Prostate gland (tissue), 2 donors: ENCODE measurements at regions of chr11 and their contacts with region 1.

Region 1: DNA sequence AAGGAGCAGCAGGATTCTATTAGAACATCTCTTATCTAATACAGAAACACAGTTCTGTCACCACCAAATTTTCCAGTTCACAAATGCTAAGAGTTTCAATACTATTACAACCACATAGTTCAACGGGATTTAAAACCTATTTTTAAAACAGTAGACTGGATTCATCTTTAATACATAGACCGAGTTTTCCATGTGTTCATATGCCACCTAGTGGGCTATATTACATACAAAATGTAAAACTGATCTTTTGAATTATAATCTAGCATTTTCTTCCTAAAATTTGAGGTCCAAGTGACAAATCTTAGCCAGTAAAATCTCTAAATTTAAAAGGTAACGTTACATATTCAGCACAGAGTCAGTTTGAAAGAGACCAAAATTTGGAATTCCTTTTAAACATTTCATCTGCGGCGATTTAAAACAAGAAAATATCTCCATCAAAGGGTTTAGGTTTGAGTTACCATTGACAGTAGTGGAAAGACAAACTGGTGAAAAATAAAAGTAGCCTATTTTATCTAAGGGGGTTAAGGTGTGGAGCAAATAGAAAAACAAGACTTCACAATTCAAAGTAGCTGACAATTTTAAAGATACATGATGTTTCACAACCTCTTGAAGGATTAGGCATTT is 269.3 kb upstream of the MPPED2 start:
- DNase-seq: no peak
- H3K4me3 ChIP-seq: no peak overlapping the region
- H3K27ac ChIP-seq: no peak overlapping the region
- H3K4me1 ChIP-seq: no peaks in the 10 kb centered on the region
- H3K27me3 ChIP-seq: no peaks in the 10 kb centered on the region
- CTCF ChIP-seq: peak; percentile 27 to 77 (median 63)
- POLR2A ChIP-seq: no peak

Region 2: GRCh38 chr11:30346068-30346688 is 509.3 kb before region 1 on chr11:
- intact Hi-C with region 1: loop called (anchors 2 kb)
- DNase-seq: peak; percentile 47
- H3K4me3 ChIP-seq: no peak overlapping the region
- H3K27ac ChIP-seq: peak overlapping the region; percentile 10 to 18
- H3K4me1 ChIP-seq: no peaks in the 10 kb centered on the region
- H3K27me3 ChIP-seq: no peaks in the 10 kb centered on the region
- CTCF ChIP-seq: peak in 3 of 4 experiments; percentile 53 to 81 (median 62)
- POLR2A ChIP-seq: no peak